Ascending aorta (tissue), 2 donors: ENCODE measurements at regions of chr1 and their contacts with region 1.

Region 1: GRCh38 chr1:37595440-37596319 is at the start of gene GNL2:
- DNase-seq: peak; percentile 86 to 98
- H3K4me3 ChIP-seq: peak within 1 kb of the TSS; percentile 78 to 80
- H3K27ac ChIP-seq: peak within 1 kb of the TSS; percentile 81 to 82
- H3K4me1 ChIP-seq: peaks cover 5 to 15% of the 10 kb centered on the region in 2 donors
- H3K27me3 ChIP-seq: no peaks in the 10 kb centered on the region
- CTCF ChIP-seq: no peak
- total RNA-seq, gene GNL2: 17.0 TPM

Region 2: DNA sequence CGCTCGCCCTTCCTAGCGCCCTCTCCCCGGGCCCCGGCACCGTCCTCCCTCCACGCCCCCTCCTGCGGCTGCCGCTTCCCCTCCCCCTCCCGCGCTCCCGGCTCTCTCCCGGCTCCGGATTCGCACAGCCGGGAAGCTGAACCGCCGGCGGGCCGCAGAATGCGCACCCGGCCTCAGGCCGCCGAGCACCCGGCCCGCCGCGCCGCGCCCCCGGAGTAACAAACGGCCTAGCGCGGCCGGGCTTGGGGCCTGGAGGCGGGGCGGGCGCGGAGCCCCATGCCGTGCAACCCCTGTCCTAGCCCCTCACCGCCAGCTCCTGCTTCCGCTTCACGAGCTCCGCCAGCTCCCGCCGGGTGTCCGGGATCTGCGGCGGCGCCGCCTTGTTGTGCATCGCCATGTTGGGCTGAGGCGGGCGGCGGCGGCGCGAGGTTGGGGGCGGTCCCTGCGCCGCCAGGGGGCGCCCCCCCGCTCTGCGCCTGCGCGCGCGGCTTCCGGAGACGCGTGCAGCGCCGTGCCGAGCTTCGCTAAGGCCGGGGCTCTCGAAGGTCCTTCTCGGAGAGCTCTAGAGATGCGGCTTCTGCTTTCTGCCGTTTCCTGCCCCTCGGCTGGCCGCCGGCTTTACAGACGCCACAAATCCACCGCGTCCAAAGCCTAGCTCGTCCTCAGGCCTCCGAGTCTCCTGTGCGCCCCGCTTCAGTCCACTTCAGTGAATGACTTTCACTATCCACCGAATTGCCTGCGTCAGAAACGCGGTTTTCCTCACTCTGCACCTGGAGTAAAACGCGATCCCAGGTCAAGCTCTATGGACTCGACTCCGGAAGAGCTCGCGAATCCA is 81.1 kb before region 1 on chr1 and contains the start of gene MEAF6:
- intact Hi-C with region 1: loop called (anchors 2 kb)
- DNase-seq: peak; percentile 12 to 91
- H3K4me3 ChIP-seq: peak within 1 kb of the TSS; percentile 92 to 99
- H3K27ac ChIP-seq: peak within 1 kb of the TSS; percentile 92 to 99
- H3K4me1 ChIP-seq: peaks cover 8 to 24% of the 10 kb centered on the region in 2 donors
- H3K27me3 ChIP-seq: no peaks in the 10 kb centered on the region
- CTCF ChIP-seq: peak; percentile 20 to 84 (median 48)
- total RNA-seq, gene MEAF6: 12.3 TPM

Region 3: DNA sequence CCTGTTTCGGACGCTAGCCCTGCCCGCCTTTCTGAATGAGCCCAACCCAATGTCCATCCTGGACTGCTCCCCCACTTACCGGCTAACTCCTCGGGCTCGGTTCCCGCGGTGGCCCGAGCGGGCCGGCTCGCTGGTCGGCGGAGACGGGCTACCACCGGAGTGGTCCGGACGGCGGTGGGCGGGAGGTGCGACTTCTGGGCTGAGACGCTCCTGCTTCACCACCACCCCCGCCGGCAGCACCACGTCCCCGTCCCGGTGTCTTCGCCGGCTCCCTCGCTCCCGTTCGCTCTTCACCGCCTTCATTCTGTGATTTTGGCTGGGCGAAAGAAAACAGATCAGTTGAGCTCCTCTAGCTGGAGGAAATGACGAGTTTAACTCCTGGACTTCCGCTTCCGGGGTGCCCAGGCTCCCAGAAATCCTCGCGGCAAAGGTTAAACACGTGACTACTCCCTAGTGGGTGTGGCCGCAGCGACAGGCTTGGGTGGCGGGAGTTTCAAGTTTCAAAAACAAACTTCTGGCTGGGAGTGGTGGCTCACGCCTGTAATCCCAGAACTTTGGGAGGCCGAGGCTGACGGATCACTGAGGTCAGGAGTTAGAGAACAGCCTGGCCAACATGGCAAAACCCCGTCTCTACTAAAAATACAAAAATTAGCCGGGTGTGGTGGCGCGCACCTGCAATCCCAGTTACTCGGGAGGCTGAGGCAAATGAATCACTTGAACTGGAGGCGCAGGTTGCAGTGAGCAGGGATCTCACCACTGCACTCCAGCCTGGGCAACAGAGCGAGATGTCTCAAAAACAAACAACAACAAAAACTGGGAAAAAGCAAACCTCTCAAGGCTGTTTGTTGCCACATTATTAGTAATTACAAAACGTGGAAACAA is 41.5 kb before region 1 on chr1 and contains the start of gene SNIP1:
- intact Hi-C with region 1: loop called (anchors 1 kb)
- DNase-seq: peak; percentile 68 to 96
- H3K4me3 ChIP-seq: peak within 1 kb of the TSS; percentile 90 to 94
- H3K27ac ChIP-seq: peak within 1 kb of the TSS; percentile 87 to 90
- H3K4me1 ChIP-seq: peaks cover 12 to 24% of the 10 kb centered on the region in 2 donors
- H3K27me3 ChIP-seq: no peaks in the 10 kb centered on the region
- CTCF ChIP-seq: no peak
- total RNA-seq, gene SNIP1: 14.4 TPM

Region 4: DNA sequence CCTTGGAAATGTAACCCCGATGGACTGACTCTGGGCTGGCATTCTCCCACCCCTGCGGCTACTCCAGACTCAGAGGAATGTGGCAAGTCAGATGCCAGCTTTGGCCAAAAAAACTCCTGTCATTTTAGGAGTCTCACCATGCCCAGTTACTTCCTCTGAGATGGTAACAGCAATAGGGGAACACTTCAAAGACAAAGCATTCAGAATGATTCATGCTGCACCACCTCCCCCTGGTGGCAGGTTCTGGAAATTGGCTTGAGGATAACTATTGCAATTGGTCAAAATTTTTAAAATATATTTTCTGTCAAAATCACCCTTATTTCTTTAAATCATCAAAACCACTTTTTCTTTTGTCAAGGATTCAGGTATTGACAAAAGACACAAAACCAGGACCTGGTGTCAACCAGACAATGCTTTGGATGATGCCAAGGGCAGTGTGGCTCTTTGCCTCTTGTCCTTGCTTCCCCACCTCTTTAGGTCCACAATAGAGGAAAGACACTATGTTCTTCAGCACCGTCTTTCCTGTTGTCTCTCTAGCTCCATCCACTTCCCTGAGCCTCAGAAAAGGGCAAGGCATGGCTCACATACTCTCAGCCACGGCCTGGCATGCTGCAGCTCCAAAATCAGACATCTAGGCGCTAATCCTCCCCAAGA is 86.8 kb after region 1 on chr1:
- intact Hi-C with region 1: loop called (anchors 2 kb)
- DNase-seq: peak in 1 of 2 donors; percentile 84
- H3K4me3 ChIP-seq: no peak overlapping the region
- H3K27ac ChIP-seq: peak overlapping the region in 1 of 2 donors; percentile 44
- H3K4me1 ChIP-seq: no peaks in the 10 kb centered on the region
- H3K27me3 ChIP-seq: no peaks in the 10 kb centered on the region
- CTCF ChIP-seq: peak; percentile 67 to 85 (median 76)

Region 5: GRCh38 chr1:37859507-37860345 is 264.0 kb after region 1 on chr1 and contains the start of gene MTF1:
- intact Hi-C with region 1: loop called (anchors 2 kb)
- DNase-seq: peak; percentile 92 to 98
- H3K4me3 ChIP-seq: peak within 1 kb of the TSS; percentile 68 to 80
- H3K27ac ChIP-seq: peak within 1 kb of the TSS; percentile 82 to 87
- H3K4me1 ChIP-seq: peaks cover 6 to 19% of the 10 kb centered on the region in 2 donors
- H3K27me3 ChIP-seq: no peaks in the 10 kb centered on the region
- CTCF ChIP-seq: peak; percentile 66 to 91 (median 81)
- total RNA-seq, gene MTF1: 10.6 TPM